Breast epithelium (tissue), 4 donors: ENCODE measurements at regions of chr7 and their contacts with region 1.

Region 1: GRCh38 chr7:91424371-91424770 is 160.1 kb downstream of the FZD1 start:
- DNase-seq: no peak
- H3K4me3 ChIP-seq: no peak overlapping the region
- H3K27ac ChIP-seq: no peak overlapping the region
- H3K4me1 ChIP-seq: no peaks in the 10 kb centered on the region
- H3K27me3 ChIP-seq: no peaks in the 10 kb centered on the region
- CTCF ChIP-seq: no peak
- POLR2A ChIP-seq: no peak

Region 2: GRCh38 chr7:91367812-91368578 is 56.4 kb before region 1 on chr7:
- intact Hi-C with region 1: loop called (anchors 2 kb)
- DNase-seq: no peak
- H3K4me3 ChIP-seq: no peak overlapping the region
- H3K27ac ChIP-seq: no peak overlapping the region
- H3K4me1 ChIP-seq: no peaks in the 10 kb centered on the region
- H3K27me3 ChIP-seq: no peaks in the 10 kb centered on the region
- CTCF ChIP-seq: no peak
- POLR2A ChIP-seq: no peak

Region 3: GRCh38 chr7:92763636-92764423 is 1339.5 kb after region 1 on chr7:
- intact Hi-C with region 1: no loop called
- DNase-seq: no peak
- H3K4me3 ChIP-seq: no peak overlapping the region
- H3K27ac ChIP-seq: no peak overlapping the region
- H3K4me1 ChIP-seq: no peaks in the 10 kb centered on the region
- H3K27me3 ChIP-seq: no peaks in the 10 kb centered on the region
- CTCF ChIP-seq: no peak
- POLR2A ChIP-seq: no peak